ENCODE measurements at regions of chr10 and their contacts with region 1.

Region 1: DNA sequence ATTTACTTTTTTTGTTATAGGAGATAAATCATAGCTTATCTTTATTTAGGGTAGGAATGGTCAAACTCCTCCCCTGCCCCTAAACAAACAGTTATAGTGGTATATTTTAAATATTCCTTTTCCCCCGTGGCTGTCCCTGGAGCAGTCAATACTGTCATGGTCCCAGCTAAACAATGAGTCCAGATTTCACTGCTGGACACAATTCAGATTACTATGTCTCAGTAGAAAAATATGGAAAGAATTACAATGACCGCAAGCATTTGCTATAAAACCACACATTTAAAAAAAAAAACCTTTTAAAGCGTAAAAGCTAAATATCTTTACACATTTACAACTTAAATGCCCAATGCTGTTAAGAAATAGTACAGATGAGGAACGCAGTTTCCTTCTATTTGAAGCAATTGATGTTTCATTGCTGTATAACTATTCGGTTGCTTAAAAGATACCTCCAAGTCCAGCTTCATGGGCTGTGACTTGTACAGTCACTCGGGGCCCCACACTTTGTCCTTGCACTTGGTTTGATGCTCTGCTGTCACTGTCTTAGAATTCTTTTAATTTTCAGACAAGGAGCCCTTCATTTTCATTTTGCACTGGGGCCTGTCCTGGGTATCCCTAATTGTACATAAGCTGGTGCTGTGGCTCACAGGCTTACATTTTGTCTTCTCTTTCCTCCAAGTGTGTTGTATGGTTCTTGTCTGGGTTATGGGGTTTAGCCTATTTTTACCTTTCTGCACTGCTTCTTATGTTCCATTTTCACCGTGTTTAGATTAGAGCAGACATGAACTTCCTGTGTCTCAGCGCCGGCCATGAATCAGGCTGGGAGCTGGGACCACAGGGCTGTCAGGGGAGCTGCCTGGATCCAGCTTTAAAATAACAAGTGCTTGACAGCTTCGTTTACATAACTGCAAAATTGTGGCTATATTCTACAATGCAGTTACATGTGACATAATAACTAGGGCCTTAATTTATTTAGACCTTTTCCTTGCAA is 530.2 kb upstream of the FZD8 start:
- DNase-seq: peak; percentile 99
- ATAC-seq: peak; percentile 71
- H3K4me3 ChIP-seq: peak overlapping the region; percentile 28
- H3K27ac ChIP-seq: peak overlapping the region; percentile 79
- H3K4me1 ChIP-seq: peaks cover 43% of the 10 kb centered on the region
- H3K27me3 ChIP-seq: no peaks in the 10 kb centered on the region
- CTCF ChIP-seq: no peak

Region 2: GRCh38 chr10:35781643-35782035 is 390.6 kb before region 1 on chr10:
- CTCF ChIA-PET with region 1: no interaction called
- POLR2A ChIA-PET with region 1: interaction called, 4 read pairs
- intact Hi-C with region 1: loop called (anchors 1 kb)
- DNase-seq: peak; percentile 72
- ATAC-seq: no peak
- H3K4me3 ChIP-seq: no peak overlapping the region
- H3K27ac ChIP-seq: peak overlapping the region; percentile 72; the same call in 1 of the 2 replicates
- H3K4me1 ChIP-seq: peaks cover 37% of the 10 kb centered on the region
- H3K27me3 ChIP-seq: no peaks in the 10 kb centered on the region
- CTCF ChIP-seq: peak; percentile 72

Region 3: GRCh38 chr10:35916791-35917190 is 255.5 kb before region 1 on chr10:
- CTCF ChIA-PET with region 1: no interaction called
- POLR2A ChIA-PET with region 1: no interaction called
- intact Hi-C with region 1: loop called (anchors 1 kb)
- DNase-seq: peak; percentile 64
- ATAC-seq: peak; percentile 21
- H3K4me3 ChIP-seq: no peak overlapping the region
- H3K27ac ChIP-seq: no peak overlapping the region
- H3K4me1 ChIP-seq: peaks cover 22% of the 10 kb centered on the region
- H3K27me3 ChIP-seq: no peaks in the 10 kb centered on the region
- CTCF ChIP-seq: peak; percentile 68

Region 4: DNA sequence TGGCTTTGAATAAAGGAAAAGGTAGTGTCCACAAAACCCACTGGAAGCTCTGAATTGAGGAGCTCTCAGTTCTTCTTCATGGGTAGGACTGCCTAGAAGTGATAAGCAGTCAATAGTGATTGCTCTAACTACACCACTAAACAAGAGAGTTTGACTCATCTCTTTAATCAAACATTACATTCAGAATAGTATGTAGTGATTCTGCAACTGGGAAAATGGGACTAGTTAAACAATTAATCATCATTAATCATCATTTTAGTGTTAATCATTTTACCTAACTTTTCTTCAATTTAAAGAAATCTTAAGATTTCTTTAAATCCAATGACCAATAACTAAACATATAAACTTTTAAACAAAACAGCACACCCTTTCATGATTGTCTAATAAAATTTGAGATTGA is 46.2 kb before region 1 on chr10:
- CTCF ChIA-PET with region 1: no interaction called
- POLR2A ChIA-PET with region 1: interaction called, 9 read pairs
- intact Hi-C with region 1: loop called (anchors 1 kb)
- DNase-seq: peak; percentile 96
- ATAC-seq: peak; percentile 98
- H3K4me3 ChIP-seq: no peak overlapping the region
- H3K27ac ChIP-seq: peak overlapping the region; percentile 55
- H3K4me1 ChIP-seq: peaks cover 24% of the 10 kb centered on the region
- H3K27me3 ChIP-seq: no peaks in the 10 kb centered on the region
- CTCF ChIP-seq: no peak

Region 5: GRCh38 chr10:36281871-36282331 is 109.7 kb after region 1 on chr10:
- CTCF ChIA-PET with region 1: no interaction called
- POLR2A ChIA-PET with region 1: no interaction called
- intact Hi-C with region 1: no loop called
- DNase-seq: no peak
- ATAC-seq: no peak
- H3K4me3 ChIP-seq: no peak overlapping the region
- H3K27ac ChIP-seq: no peak overlapping the region
- H3K4me1 ChIP-seq: no peaks in the 10 kb centered on the region
- H3K27me3 ChIP-seq: no peaks in the 10 kb centered on the region
- CTCF ChIP-seq: no peak

Region 6: DNA sequence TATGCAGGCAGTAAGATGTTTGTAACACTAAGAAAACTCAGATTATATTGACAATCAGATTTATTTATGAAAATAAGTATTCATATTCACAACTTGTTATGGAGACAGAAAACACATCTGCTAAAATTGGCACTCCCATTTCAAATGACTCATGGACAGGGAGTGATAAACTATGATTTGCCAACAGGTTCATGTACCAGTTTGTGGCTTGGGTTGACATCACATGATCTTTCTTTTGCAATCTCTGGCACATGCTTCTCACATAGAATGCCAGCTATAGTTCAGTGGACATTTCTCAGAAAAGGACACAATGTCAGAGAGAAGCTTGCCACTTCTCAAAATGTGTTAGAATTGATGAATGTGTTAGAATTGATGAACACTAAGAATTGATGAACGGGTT is 289.9 kb after region 1 on chr10:
- CTCF ChIA-PET with region 1: no interaction called
- POLR2A ChIA-PET with region 1: no interaction called
- intact Hi-C with region 1: loop called (anchors 1 kb)
- DNase-seq: peak; percentile 95
- ATAC-seq: no peak
- H3K4me3 ChIP-seq: no peak overlapping the region
- H3K27ac ChIP-seq: no peak overlapping the region
- H3K4me1 ChIP-seq: peaks cover 40% of the 10 kb centered on the region
- H3K27me3 ChIP-seq: no peaks in the 10 kb centered on the region
- CTCF ChIP-seq: no peak

Region 7: DNA sequence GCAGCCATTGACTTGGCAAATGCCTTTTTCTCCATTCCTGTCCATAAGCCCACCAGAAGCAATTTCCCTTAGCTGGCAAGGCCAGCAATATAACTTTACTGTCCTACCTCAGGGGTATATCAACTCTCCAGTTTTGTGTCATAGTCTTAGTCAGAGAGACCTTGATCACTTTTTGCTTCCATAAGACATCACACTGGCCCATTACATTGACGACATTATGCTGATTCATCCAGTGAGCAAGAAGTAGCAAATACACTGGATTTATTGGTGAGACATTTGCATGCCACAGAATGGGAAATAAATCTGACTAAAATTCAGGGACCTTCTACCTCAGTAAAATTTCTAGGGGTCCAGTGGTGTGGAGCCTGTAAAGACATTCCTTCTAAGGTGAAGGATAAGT is 303.5 kb after region 1 on chr10:
- CTCF ChIA-PET with region 1: no interaction called
- POLR2A ChIA-PET with region 1: no interaction called
- intact Hi-C with region 1: no loop called
- DNase-seq: peak; percentile 63
- ATAC-seq: no peak
- H3K4me3 ChIP-seq: no peak overlapping the region
- H3K27ac ChIP-seq: peak overlapping the region; percentile 19
- H3K4me1 ChIP-seq: peaks cover 7% of the 10 kb centered on the region; the same call in 1 of the 2 replicates
- H3K27me3 ChIP-seq: no peaks in the 10 kb centered on the region
- CTCF ChIP-seq: no peak

Region 8: DNA sequence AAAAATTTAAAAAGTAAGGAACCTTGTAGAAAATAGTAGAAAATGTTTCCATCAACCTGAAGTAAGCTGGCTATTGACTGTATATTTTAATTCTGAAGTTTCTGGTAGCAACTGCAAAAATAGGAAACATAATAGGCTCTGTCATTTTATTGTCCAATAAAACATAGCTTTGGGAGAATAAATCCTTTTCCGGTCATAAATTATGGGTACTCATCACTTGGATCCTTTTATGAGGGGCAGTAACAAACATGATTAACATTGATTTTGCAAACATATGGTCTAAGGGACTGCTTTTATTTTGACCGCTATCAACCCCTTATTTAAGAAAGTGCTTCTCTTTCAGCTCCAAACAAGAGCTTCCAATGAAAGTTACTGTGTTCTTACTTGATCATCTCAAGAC is 457.2 kb after region 1 on chr10:
- CTCF ChIA-PET with region 1: no interaction called
- POLR2A ChIA-PET with region 1: interaction called, 6 read pairs
- intact Hi-C with region 1: loop called (anchors 1 kb)
- DNase-seq: peak; percentile 76
- ATAC-seq: peak; percentile 71
- H3K4me3 ChIP-seq: no peak overlapping the region
- H3K27ac ChIP-seq: peak overlapping the region; percentile 81
- H3K4me1 ChIP-seq: peaks cover 24% of the 10 kb centered on the region
- H3K27me3 ChIP-seq: no peaks in the 10 kb centered on the region
- CTCF ChIP-seq: no peak

Region 9: GRCh38 chr10:36779234-36779846 is 607.1 kb after region 1 on chr10:
- CTCF ChIA-PET with region 1: interaction called, 5 read pairs
- POLR2A ChIA-PET with region 1: no interaction called
- intact Hi-C with region 1: loop called (anchors 1 kb)
- DNase-seq: peak; percentile 100
- ATAC-seq: peak; percentile 98
- H3K4me3 ChIP-seq: no peak overlapping the region
- H3K27ac ChIP-seq: peak overlapping the region; percentile 13
- H3K4me1 ChIP-seq: peaks cover 25% of the 10 kb centered on the region
- H3K27me3 ChIP-seq: no peaks in the 10 kb centered on the region
- CTCF ChIP-seq: peak; percentile 100

Measured in PC-3 (cell line).